Activated naive CD4-positive, alpha-beta T cell treated with anti-CD3 and anti-CD28 coated beads for 36 hours (primary cell): ENCODE measurements at regions of chr6 and their contacts with region 1.

Region 1: GRCh38 chr6:152863618-152864326 is 113.2 kb downstream of the VIP start:
- DNase-seq: peak; percentile 81
- H3K4me3 Mint-ChIP-seq: no peak overlapping the region
- H3K27ac Mint-ChIP-seq: no peak overlapping the region
- H3K4me1 Mint-ChIP-seq: no peaks in the 10 kb centered on the region
- H3K27me3 Mint-ChIP-seq: peaks cover 16% of the 10 kb centered on the region

Region 2: GRCh38 chr6:152642989-152643388 is 220.8 kb before region 1 on chr6:
- CTCF ChIA-PET with region 1: no interaction called
- intact Hi-C with region 1: no loop called
- DNase-seq: peak; percentile 56
- H3K4me3 Mint-ChIP-seq: no peak overlapping the region
- H3K27ac Mint-ChIP-seq: no peak overlapping the region
- H3K4me1 Mint-ChIP-seq: no peaks in the 10 kb centered on the region
- H3K27me3 Mint-ChIP-seq: peaks cover 13% of the 10 kb centered on the region

Region 3: GRCh38 chr6:152897799-152898399 is 34.1 kb after region 1 on chr6:
- CTCF ChIA-PET with region 1: interaction called, 5 read pairs
- intact Hi-C with region 1: loop called (anchors 1 kb)
- DNase-seq: peak; percentile 83
- H3K4me3 Mint-ChIP-seq: no peak overlapping the region
- H3K27ac Mint-ChIP-seq: no peak overlapping the region
- H3K4me1 Mint-ChIP-seq: no peaks in the 10 kb centered on the region
- H3K27me3 Mint-ChIP-seq: peaks cover 36% of the 10 kb centered on the region

Region 4: DNA sequence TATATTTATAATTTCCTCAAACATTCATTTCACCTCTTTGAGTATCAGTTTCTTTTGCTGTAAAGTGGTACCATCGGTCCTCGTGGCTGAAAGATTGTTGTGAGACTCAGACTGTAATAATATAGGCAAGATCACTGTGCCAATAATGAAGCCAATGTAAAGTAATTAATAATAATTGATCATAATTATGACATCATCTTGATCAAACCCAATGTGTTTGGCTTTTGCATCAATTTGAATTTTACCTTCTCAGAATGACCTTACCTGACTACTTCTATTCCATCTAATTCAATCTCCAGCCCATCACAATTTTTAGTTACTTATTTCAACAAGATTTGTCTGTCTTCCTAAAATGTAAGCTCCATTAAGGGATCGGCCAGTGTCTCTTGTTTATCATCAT is 154.6 kb after region 1 on chr6:
- CTCF ChIA-PET with region 1: interaction called, 31 read pairs
- intact Hi-C with region 1: loop called (anchors 1 kb)
- DNase-seq: no peak
- H3K4me3 Mint-ChIP-seq: no peak overlapping the region
- H3K27ac Mint-ChIP-seq: no peak overlapping the region
- H3K4me1 Mint-ChIP-seq: no peaks in the 10 kb centered on the region
- H3K27me3 Mint-ChIP-seq: peaks cover 17% of the 10 kb centered on the region

Region 5: GRCh38 chr6:153312641-153313040 is 448.9 kb after region 1 on chr6:
- CTCF ChIA-PET with region 1: no interaction called
- intact Hi-C with region 1: loop called (anchors 1 kb)
- DNase-seq: peak; percentile 54
- H3K4me3 Mint-ChIP-seq: no peak overlapping the region
- H3K27ac Mint-ChIP-seq: no peak overlapping the region
- H3K4me1 Mint-ChIP-seq: no peaks in the 10 kb centered on the region
- H3K27me3 Mint-ChIP-seq: no peaks in the 10 kb centered on the region